Activated CD4-positive, alpha-beta T cell treated with anti-CD3 and anti-CD28 coated beads for 36 hours (primary cell): ENCODE measurements at regions of chr11 and their contacts with region 1.

Region 1: DNA sequence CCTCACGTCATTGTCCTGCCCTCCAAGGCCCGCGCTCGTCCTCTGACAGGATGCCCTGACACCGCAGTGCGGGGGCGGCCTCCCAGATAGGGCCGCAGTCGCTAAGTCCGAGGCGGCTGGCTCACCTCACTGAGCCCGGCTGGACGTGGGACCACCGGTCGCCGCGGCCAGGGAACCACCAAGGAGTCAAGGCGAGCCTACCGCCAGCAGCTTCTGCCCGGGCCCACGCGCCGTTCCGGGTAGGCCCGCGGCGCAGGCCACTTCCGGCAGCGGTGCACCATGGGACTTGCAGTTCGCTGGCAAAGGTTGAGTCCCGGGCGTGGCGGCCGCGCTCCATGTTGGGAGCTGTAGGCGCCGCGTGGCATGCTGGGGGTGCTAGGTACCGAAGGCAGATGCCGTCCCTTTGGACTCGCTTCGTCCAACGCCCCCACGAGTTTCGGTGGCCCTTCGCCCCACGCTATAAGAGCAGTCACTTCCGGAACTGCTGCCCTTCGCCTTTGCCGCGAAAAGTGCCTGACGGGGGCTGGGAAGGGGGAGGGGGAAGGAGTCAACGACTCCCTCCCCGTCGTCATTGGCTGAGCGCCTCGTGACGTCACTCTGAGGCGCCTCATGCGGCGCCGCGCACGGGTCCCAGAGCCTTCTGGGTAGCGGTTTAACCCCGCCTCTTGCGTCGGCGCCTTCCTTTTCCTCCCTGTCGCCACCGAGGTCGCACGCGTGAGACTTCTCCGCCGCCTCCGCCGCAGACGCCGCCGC is at the start of gene RPLP2:
- DNase-seq: peak; percentile 99
- ATAC-seq: peak; percentile 86
- H3K4me3 Mint-ChIP-seq: peak within 1 kb of the TSS; percentile 94
- H3K27ac Mint-ChIP-seq: peak within 1 kb of the TSS; percentile 97
- H3K4me1 Mint-ChIP-seq: peaks cover 30% of the 10 kb centered on the region
- H3K27me3 Mint-ChIP-seq: no peaks in the 10 kb centered on the region
- total RNA-seq, gene RPLP2: 2,132 to 3,230 TPM

Region 2: DNA sequence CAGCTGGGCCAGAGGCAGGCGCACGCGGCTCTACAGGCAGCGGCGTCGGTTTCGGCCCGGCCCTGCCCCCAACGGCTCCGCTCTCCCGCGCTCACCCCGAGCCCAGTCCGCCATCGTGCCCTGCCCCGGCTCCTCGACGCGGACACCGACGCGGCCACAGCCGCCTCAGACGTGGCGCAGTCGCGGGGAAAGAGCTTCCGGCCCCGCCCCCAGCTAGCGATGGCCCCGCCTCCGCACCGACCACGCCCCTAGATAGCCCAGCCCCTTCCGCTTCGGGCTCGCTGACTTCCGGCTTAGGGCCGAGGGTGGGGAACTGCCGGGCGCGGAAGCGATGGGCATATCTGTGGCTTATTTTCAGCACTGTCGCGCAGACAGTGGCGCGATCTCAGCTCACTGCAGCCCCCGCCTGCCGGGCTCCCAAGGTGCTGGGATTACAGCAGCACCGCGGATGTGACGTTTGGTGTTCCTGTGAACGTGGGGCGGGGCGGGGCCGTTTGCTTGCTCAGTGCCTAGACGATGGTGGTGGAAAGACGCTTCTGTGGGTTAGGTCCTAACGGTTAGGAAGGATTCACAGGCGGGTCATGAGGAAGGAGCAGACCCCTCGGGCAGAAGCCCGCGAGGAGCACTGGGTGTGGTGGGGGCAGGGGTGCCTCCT is 602.1 kb before region 1 on chr11 and contains the starts of genes BET1L and RIC8A:
- CTCF ChIA-PET with region 1: no interaction called
- POLR2A ChIA-PET with region 1: no interaction called
- intact Hi-C with region 1: loop called in 1 of 2 experiments (anchors 1 kb)
- DNase-seq: peak; percentile 99
- ATAC-seq: peak; percentile 89
- H3K4me3 Mint-ChIP-seq: peak within 1 kb of the TSS; percentile 94
- H3K27ac Mint-ChIP-seq: peak within 1 kb of the TSS; percentile 99
- H3K4me1 Mint-ChIP-seq: peaks cover 56% of the 10 kb centered on the region
- H3K27me3 Mint-ChIP-seq: no peaks in the 10 kb centered on the region
- total RNA-seq, gene BET1L: 45.5 to 49.4 TPM
- total RNA-seq, gene RIC8A: 104 to 124 TPM

Region 3: DNA sequence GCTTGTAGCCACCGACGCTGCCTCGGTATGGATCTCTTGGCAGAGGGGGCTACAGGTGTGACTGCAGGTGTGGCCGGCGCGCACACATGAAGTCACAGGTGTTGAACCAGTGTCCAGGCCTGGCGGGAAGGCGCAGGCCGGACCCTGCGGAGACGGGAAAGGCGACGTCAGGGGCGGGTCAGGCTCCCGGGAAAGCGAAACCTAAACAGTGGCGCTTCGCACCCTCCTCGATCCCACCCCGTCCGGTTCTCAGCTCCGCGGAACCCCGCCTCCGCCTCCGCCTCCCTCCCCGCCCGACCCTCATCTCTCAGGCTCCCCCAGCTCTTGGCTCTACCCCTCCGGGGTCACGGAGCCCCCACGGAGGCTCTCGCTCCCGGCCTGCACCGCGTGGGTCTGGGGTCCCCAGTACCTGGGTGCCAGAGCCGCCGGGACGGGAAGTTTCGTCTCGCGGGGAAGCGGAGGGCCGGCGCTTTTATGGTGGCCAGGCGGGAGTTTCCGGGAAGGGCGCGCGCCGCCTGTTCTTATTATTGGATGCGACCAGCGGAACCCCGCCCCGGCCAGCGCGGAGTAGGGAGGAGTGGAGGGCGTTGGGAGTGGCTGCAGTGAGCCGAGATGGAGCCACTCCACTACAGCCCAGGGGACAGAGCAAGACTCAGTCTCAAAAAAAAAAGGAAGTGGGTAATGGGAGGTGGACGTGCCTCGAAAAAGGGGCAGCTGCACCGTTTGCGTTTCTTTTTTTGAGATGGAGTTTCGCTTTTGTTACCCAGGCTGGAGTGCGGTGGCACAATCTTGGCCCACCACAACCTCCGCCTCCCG is 193.8 kb before region 1 on chr11 and contains the start of gene IRF7:
- CTCF ChIA-PET with region 1: no interaction called
- POLR2A ChIA-PET with region 1: no interaction called
- intact Hi-C with region 1: loop called in 1 of 2 experiments (anchors 1 kb)
- DNase-seq: peak; percentile 93
- ATAC-seq: peak; percentile 81
- H3K4me3 Mint-ChIP-seq: peak within 1 kb of the TSS; percentile 85
- H3K27ac Mint-ChIP-seq: peak within 1 kb of the TSS; percentile 95
- H3K4me1 Mint-ChIP-seq: peaks cover 13% of the 10 kb centered on the region
- H3K27me3 Mint-ChIP-seq: no peaks in the 10 kb centered on the region
- total RNA-seq, gene IRF7: 57.1 to 62.6 TPM

Region 4: GRCh38 chr11:777288-778255 is 31.9 kb before region 1 on chr11 and contains the start of gene GATD1:
- CTCF ChIA-PET with region 1: interaction called, 3 read pairs
- POLR2A ChIA-PET with region 1: interaction called, 3 read pairs
- intact Hi-C with region 1: loop called in 1 of 2 experiments (anchors 1 kb)
- DNase-seq: peak; percentile 97
- ATAC-seq: peak; percentile 91
- H3K4me3 Mint-ChIP-seq: peak within 1 kb of the TSS; percentile 89
- H3K27ac Mint-ChIP-seq: peak within 1 kb of the TSS; percentile 82
- H3K4me1 Mint-ChIP-seq: peaks cover 20% of the 10 kb centered on the region
- H3K27me3 Mint-ChIP-seq: no peaks in the 10 kb centered on the region
- total RNA-seq, gene GATD1: 45.7 to 59.8 TPM

Region 5: GRCh38 chr11:876519-876918 is 67.1 kb after region 1 on chr11:
- CTCF ChIA-PET with region 1: no interaction called
- POLR2A ChIA-PET with region 1: no interaction called
- intact Hi-C with region 1: no loop called
- DNase-seq: no peak
- ATAC-seq: no peak
- H3K4me3 Mint-ChIP-seq: no peak overlapping the region
- H3K27ac Mint-ChIP-seq: no peak overlapping the region
- H3K4me1 Mint-ChIP-seq: no peaks in the 10 kb centered on the region
- H3K27me3 Mint-ChIP-seq: no peaks in the 10 kb centered on the region

Region 6: GRCh38 chr11:925496-926321 is 116.2 kb after region 1 on chr11 and contains the start of gene AP2A2:
- CTCF ChIA-PET with region 1: interaction called, 4 read pairs
- POLR2A ChIA-PET with region 1: no interaction called
- intact Hi-C with region 1: loop called in 1 of 2 experiments (anchors 1 kb)
- DNase-seq: peak; percentile 96
- ATAC-seq: peak; percentile 65
- H3K4me3 Mint-ChIP-seq: peak within 1 kb of the TSS; percentile 80
- H3K27ac Mint-ChIP-seq: peak within 1 kb of the TSS; percentile 86
- H3K4me1 Mint-ChIP-seq: peaks cover 33% of the 10 kb centered on the region
- H3K27me3 Mint-ChIP-seq: no peaks in the 10 kb centered on the region
- total RNA-seq, gene AP2A2: 43.5 to 71.6 TPM

Region 7: DNA sequence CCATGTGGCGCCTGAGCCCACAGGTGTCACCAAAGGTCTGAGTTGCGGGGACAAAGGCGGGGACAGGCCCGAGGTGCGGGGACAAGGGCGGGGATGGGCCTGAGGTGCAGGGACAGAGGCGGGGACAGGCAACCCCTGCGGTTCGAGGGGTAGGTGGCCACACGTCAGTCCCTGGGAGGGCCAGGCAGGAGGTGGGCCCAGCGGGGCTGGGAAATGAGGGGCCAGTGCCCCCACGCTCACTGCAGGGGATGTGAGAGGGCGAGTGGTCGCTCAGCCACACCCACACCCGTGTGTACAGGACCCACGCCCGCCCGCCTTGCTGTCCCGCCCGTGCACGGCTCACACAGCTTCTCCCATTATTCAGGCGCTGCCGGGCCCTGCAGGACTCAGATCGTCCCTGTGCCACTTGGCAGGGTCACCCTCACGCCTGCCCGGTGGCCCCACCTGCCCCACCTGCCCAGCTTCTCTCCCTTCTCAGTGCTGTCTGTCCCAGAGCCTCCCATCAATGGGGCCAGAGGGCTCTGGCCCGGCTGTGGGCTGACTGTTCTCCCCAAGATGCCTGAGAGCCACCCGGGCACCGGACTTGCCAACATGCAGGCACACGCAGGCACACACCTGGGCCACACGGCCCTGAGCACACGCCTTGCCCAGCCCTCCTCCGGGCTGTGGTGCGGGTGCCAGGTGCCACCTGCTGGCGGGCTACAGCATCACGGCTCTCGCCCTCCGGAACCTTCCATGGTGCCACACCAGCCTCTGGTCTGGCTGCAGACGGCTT is 241.3 kb after region 1 on chr11:
- CTCF ChIA-PET with region 1: no interaction called
- POLR2A ChIA-PET with region 1: no interaction called
- intact Hi-C with region 1: no loop called
- DNase-seq: peak; percentile 79
- ATAC-seq: peak; percentile 96
- H3K4me3 Mint-ChIP-seq: no peak overlapping the region
- H3K27ac Mint-ChIP-seq: no peak overlapping the region
- H3K4me1 Mint-ChIP-seq: no peaks in the 10 kb centered on the region
- H3K27me3 Mint-ChIP-seq: peaks cover 4% of the 10 kb centered on the region